ENCODE measurements at regions of chr4 and their contacts with region 1.

Region 1: GRCh38 chr4:82284858-82285805 is 88.7 kb downstream of the HNRNPD start:
- DNase-seq: peak; percentile 99
- H3K4me3 ChIP-seq: peak overlapping the region; percentile 25 to 70
- H3K4me3 Mint-ChIP-seq: peak overlapping the region; percentile 81 to 94 (median 86)
- H3K27ac ChIP-seq: peak overlapping the region; percentile 49
- H3K27ac Mint-ChIP-seq: peak overlapping the region; percentile 62 to 91 (median 88)
- H3K4me1 ChIP-seq: peaks cover 12% of the 10 kb centered on the region
- H3K4me1 Mint-ChIP-seq: peaks cover 8 to 19% (median 14%) of the 10 kb centered on the region in 4 donors
- H3K27me3 ChIP-seq: no peaks in the 10 kb centered on the region
- H3K27me3 Mint-ChIP-seq: no peaks in the 10 kb centered on the region

Region 2: GRCh38 chr4:81405894-81406401 is 879.2 kb before region 1 on chr4:
- CTCF ChIA-PET with region 1: no interaction called
- POLR2A ChIA-PET with region 1: no interaction called
- intact Hi-C with region 1: loop called (anchors 1 kb)
- DNase-seq: peak; percentile 46 to 74 (median 70)
- H3K4me3 ChIP-seq: no peak overlapping the region
- H3K4me3 Mint-ChIP-seq: peak overlapping the region in 3 of 8 donors; percentile 0 to 52 (median 35)
- H3K27ac ChIP-seq: no peak overlapping the region
- H3K27ac Mint-ChIP-seq: no peak overlapping the region
- H3K4me1 ChIP-seq: peaks cover 6% of the 10 kb centered on the region
- H3K4me1 Mint-ChIP-seq: peaks cover 0 to 3% (median 1%) of the 10 kb centered on the region in 4 donors
- H3K27me3 ChIP-seq: no peaks in the 10 kb centered on the region
- H3K27me3 Mint-ChIP-seq: peaks cover 1 to 2% of the 10 kb centered on the region in 2 donors

Region 3: GRCh38 chr4:82217986-82218715 is 67.0 kb before region 1 on chr4:
- CTCF ChIA-PET with region 1: interaction called, 4 read pairs
- POLR2A ChIA-PET with region 1: no interaction called
- intact Hi-C with region 1: loop called (anchors 5 kb)
- DNase-seq: peak in 4 of 5 donors; percentile 10 to 22 (median 17)
- H3K4me3 ChIP-seq: no peak overlapping the region
- H3K4me3 Mint-ChIP-seq: no peak overlapping the region
- H3K27ac ChIP-seq: no peak overlapping the region
- H3K27ac Mint-ChIP-seq: peak overlapping the region in 1 of 7 donors; percentile 32
- H3K4me1 ChIP-seq: peaks cover 15% of the 10 kb centered on the region
- H3K4me1 Mint-ChIP-seq: peaks cover 13 to 24% (median 15%) of the 10 kb centered on the region in 4 donors
- H3K27me3 ChIP-seq: no peaks in the 10 kb centered on the region
- H3K27me3 Mint-ChIP-seq: no peaks in the 10 kb centered on the region

Region 4: DNA sequence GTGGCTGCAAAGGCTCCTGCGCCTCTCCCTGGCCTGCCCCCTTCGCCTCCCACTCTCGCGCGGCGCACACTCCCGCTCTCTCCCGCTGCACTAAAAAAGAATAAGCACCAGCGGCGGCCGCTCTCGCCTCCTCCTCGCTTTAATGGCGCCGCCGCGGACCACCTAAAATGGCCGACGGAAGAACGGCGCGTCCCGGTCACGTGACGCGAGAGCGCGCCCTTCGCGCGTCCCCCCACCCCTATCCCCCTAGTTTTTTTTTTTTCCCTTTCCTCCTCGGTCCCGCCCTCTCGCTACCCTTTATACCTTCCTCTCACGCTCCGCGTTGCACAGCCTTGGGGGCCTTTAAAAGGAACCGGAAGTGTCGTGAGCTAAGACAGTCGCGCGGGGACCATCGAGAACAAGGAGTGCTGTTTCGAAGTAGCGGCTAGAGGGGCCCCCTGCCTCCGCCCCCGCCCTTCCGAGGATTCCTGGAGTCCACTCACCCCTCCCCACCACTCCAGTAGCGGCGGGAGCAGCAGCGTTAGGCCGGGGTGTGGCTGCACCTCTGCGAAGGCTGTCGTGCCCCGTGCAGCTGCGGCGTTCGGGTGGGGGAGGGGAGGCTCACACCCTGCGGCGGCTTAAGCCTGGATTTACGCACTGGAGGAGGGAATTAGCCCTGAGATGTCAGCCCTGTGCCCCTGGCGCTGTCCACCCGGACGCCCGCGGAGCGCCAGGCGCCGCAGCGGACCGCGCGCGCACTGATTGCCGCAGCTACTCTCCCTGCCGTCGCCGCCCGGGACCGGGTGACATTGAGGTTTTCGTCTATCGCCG is 88.9 kb after region 1 on chr4 and contains the start of gene HNRNPD:
- CTCF ChIA-PET with region 1: interaction called, 4 read pairs
- POLR2A ChIA-PET with region 1: interaction called, 10 read pairs
- intact Hi-C with region 1: loop called (anchors 1 kb)
- DNase-seq: peak; percentile 91 to 96 (median 95)
- H3K4me3 ChIP-seq: peak within 1 kb of the TSS; percentile 95 to 96
- H3K4me3 Mint-ChIP-seq: peak within 1 kb of the TSS; percentile 96 to 100 (median 98)
- H3K27ac ChIP-seq: peak within 1 kb of the TSS; percentile 98
- H3K27ac Mint-ChIP-seq: peak within 1 kb of the TSS; percentile 98 to 100 (median 99)
- H3K4me1 ChIP-seq: peaks cover 53% of the 10 kb centered on the region
- H3K4me1 Mint-ChIP-seq: peaks cover 32 to 67% (median 48%) of the 10 kb centered on the region in 4 donors
- H3K27me3 ChIP-seq: no peaks in the 10 kb centered on the region
- H3K27me3 Mint-ChIP-seq: peaks cover 0 to 2% of the 10 kb centered on the region in 2 donors
- total RNA-seq, gene HNRNPD: 234 to 247 TPM

Region 5: GRCh38 chr4:83484500-83485461 is 1199.6 kb after region 1 on chr4 and contains the start of gene ABRAXAS1:
- CTCF ChIA-PET with region 1: no interaction called
- POLR2A ChIA-PET with region 1: no interaction called
- intact Hi-C with region 1: loop called (anchors 10 kb)
- DNase-seq: peak; percentile 93 to 96 (median 95)
- H3K4me3 ChIP-seq: peak within 1 kb of the TSS; percentile 67 to 79
- H3K4me3 Mint-ChIP-seq: peak within 1 kb of the TSS; percentile 91 to 100 (median 96)
- H3K27ac ChIP-seq: peak within 1 kb of the TSS; percentile 68
- H3K27ac Mint-ChIP-seq: peak within 1 kb of the TSS; percentile 95 to 98 (median 97)
- H3K4me1 ChIP-seq: peaks cover 23% of the 10 kb centered on the region
- H3K4me1 Mint-ChIP-seq: peaks cover 18 to 36% (median 27%) of the 10 kb centered on the region in 4 donors
- H3K27me3 ChIP-seq: no peaks in the 10 kb centered on the region
- H3K27me3 Mint-ChIP-seq: peaks cover 0 to 2% of the 10 kb centered on the region in 2 donors
- total RNA-seq, gene ABRAXAS1: 35.9 to 36.7 TPM

Measured in CD4-positive, alpha-beta memory T cell (primary cell).